IMR-90 (cell line): ENCODE measurements at regions of chr7 and their contacts with region 1.

Region 1: GRCh38 chr7:41705109-41705901 is 2.4 kb upstream of the INHBA start:
- DNase-seq: peak; percentile 93
- ATAC-seq: peak; percentile 80
- H3K4me3 ChIP-seq: peak overlapping the region; percentile 60
- H3K27ac ChIP-seq: peak overlapping the region; percentile 96
- H3K4me1 ChIP-seq: peaks cover 22% of the 10 kb centered on the region
- H3K27me3 ChIP-seq: no peaks in the 10 kb centered on the region
- CTCF ChIP-seq: peak; percentile 88
- POLR2A ChIP-seq: peak; percentile 54; the same call in 1 of the 2 replicates
- RAD21 ChIP-seq: peak; percentile 93

Region 2: GRCh38 chr7:40232242-40232893 is 1472.9 kb before region 1 on chr7:
- CTCF ChIA-PET with region 1: interaction called, 8 read pairs
- POLR2A ChIA-PET with region 1: no interaction called
- dilution Hi-C with region 1: no loop called
- in situ Hi-C with region 1: loop called (anchors 10 kb)
- intact Hi-C with region 1: loop called (anchors 2 kb)
- DNase-seq: peak; percentile 80
- ATAC-seq: peak; percentile 89
- H3K4me3 ChIP-seq: no peak overlapping the region
- H3K27ac ChIP-seq: no peak overlapping the region
- H3K4me1 ChIP-seq: peaks cover 4% of the 10 kb centered on the region; the same call in 1 of the 2 replicates
- H3K27me3 ChIP-seq: no peaks in the 10 kb centered on the region
- CTCF ChIP-seq: peak; percentile 81
- POLR2A ChIP-seq: no peak
- RAD21 ChIP-seq: peak; percentile 84

Region 3: GRCh38 chr7:40474790-40475680 is 1230.3 kb before region 1 on chr7:
- CTCF ChIA-PET with region 1: no interaction called
- POLR2A ChIA-PET with region 1: no interaction called
- dilution Hi-C with region 1: no loop called
- in situ Hi-C with region 1: no loop called
- intact Hi-C with region 1: loop called (anchors 10 kb)
- DNase-seq: no peak
- ATAC-seq: no peak
- H3K4me3 ChIP-seq: no peak overlapping the region
- H3K27ac ChIP-seq: no peak overlapping the region
- H3K4me1 ChIP-seq: peaks cover 6% of the 10 kb centered on the region
- H3K27me3 ChIP-seq: no peaks in the 10 kb centered on the region
- CTCF ChIP-seq: no peak
- POLR2A ChIP-seq: no peak
- RAD21 ChIP-seq: no peak

Region 4: GRCh38 chr7:40682696-40683095 is 1022.6 kb before region 1 on chr7:
- CTCF ChIA-PET with region 1: no interaction called
- POLR2A ChIA-PET with region 1: interaction called, 5 read pairs
- dilution Hi-C with region 1: no loop called
- in situ Hi-C with region 1: no loop called
- intact Hi-C with region 1: loop called (anchors 1 kb)
- DNase-seq: no peak
- ATAC-seq: peak; percentile 53
- H3K4me3 ChIP-seq: no peak overlapping the region
- H3K27ac ChIP-seq: no peak overlapping the region
- H3K4me1 ChIP-seq: peaks cover 5% of the 10 kb centered on the region; the same call in 1 of the 2 replicates
- H3K27me3 ChIP-seq: no peaks in the 10 kb centered on the region
- CTCF ChIP-seq: no peak
- POLR2A ChIP-seq: no peak
- RAD21 ChIP-seq: no peak

Region 5: GRCh38 chr7:40827217-40828085 is 877.9 kb before region 1 on chr7:
- CTCF ChIA-PET with region 1: interaction called, 3 read pairs
- POLR2A ChIA-PET with region 1: no interaction called
- dilution Hi-C with region 1: no loop called
- in situ Hi-C with region 1: no loop called
- intact Hi-C with region 1: loop called (anchors 2 kb)
- DNase-seq: no peak
- ATAC-seq: peak; percentile 30
- H3K4me3 ChIP-seq: no peak overlapping the region
- H3K27ac ChIP-seq: peak overlapping the region; percentile 85
- H3K4me1 ChIP-seq: peaks cover 16% of the 10 kb centered on the region
- H3K27me3 ChIP-seq: no peaks in the 10 kb centered on the region
- CTCF ChIP-seq: no peak
- POLR2A ChIP-seq: no peak
- RAD21 ChIP-seq: no peak

Region 6: GRCh38 chr7:41881331-41882130 is 176.2 kb after region 1 on chr7:
- CTCF ChIA-PET with region 1: no interaction called
- POLR2A ChIA-PET with region 1: no interaction called
- dilution Hi-C with region 1: no loop called
- in situ Hi-C with region 1: no loop called
- intact Hi-C with region 1: loop called (anchors 10 kb)
- DNase-seq: peak; percentile 89
- ATAC-seq: no peak
- H3K4me3 ChIP-seq: no peak overlapping the region
- H3K27ac ChIP-seq: peak overlapping the region; percentile 59
- H3K4me1 ChIP-seq: peaks cover 38% of the 10 kb centered on the region
- H3K27me3 ChIP-seq: no peaks in the 10 kb centered on the region
- CTCF ChIP-seq: no peak
- POLR2A ChIP-seq: no peak
- RAD21 ChIP-seq: no peak